ENCODE measurements at regions of chr15 and their contacts with region 1.

Region 1: GRCh38 chr15:41811432-41812195 is 16.3 kb upstream of the JMJD7 start:
- DNase-seq: peak; percentile 65 to 76 (median 73)
- H3K4me3 ChIP-seq: no peak overlapping the region
- H3K4me3 Mint-ChIP-seq: no peak overlapping the region
- H3K27ac ChIP-seq: no peak overlapping the region
- H3K27ac Mint-ChIP-seq: no peak overlapping the region
- H3K4me1 ChIP-seq: peaks cover 0 to 3% of the 10 kb centered on the region in 2 donors
- H3K4me1 Mint-ChIP-seq: peaks cover 4% of the 10 kb centered on the region
- H3K27me3 ChIP-seq: no peaks in the 10 kb centered on the region
- H3K27me3 Mint-ChIP-seq: peaks cover 0 to 1% (median 1%) of the 10 kb centered on the region in 3 donors
- CTCF ChIP-seq: peak; percentile 89

Region 2: GRCh38 chr15:41603941-41604911 is 207.4 kb before region 1 on chr15:
- intact Hi-C with region 1: loop called (anchors 5 kb)
- DNase-seq: peak; percentile 41 to 62 (median 60)
- H3K4me3 ChIP-seq: peak overlapping the region; percentile 20 to 70 (median 54)
- H3K4me3 Mint-ChIP-seq: peak overlapping the region; percentile 81 to 94
- H3K27ac ChIP-seq: no peak overlapping the region
- H3K27ac Mint-ChIP-seq: peak overlapping the region in 6 of 7 donors; percentile 26 to 73 (median 46)
- H3K4me1 ChIP-seq: peaks cover 8 to 10% of the 10 kb centered on the region in 2 donors
- H3K4me1 Mint-ChIP-seq: peaks cover 12% of the 10 kb centered on the region
- H3K27me3 ChIP-seq: no peaks in the 10 kb centered on the region
- H3K27me3 Mint-ChIP-seq: peaks cover 0 to 14% (median 6%) of the 10 kb centered on the region in 3 donors
- CTCF ChIP-seq: peak; percentile 93

Region 3: DNA sequence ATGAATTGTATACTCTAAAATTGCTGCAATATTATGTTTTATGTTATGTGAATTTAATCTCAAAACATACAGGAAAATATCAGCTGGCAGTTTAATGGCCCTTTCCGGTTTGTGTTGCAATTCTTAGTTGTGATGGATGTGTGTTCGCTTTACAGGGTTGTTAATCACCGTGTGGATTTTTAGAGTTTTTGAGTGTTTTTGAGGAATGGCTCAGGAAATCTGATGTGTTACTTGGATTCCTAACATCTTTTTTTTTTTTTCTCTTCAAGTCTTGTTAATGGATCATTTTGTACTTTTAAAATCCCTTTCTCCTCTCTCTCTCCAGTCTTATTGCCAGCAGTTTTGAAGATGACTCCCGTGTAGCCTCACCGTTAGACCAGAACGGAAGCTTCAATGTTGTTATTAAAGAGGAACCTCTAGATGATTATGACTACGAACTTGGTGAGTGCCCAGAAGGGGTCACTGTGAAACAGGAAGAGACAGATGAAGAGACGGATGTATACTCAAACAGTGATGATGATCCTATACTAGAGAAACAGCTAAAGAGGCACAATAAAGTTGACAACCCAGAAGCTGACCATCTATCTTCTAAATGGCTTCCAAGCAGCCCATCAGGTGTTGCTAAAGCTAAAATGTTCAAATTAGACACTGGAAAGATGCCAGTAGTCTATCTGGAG is 115.7 kb before region 1 on chr15:
- intact Hi-C with region 1: loop called in 1 of 2 experiments (anchors 10 kb)
- DNase-seq: peak; percentile 76 to 83 (median 81)
- H3K4me3 ChIP-seq: peak overlapping the region in 2 of 3 experiments; percentile 24 to 45
- H3K4me3 Mint-ChIP-seq: peak overlapping the region; percentile 67 to 79
- H3K27ac ChIP-seq: peak overlapping the region in 1 of 2 donors; percentile 74
- H3K27ac Mint-ChIP-seq: peak overlapping the region; percentile 84 to 94 (median 88)
- H3K4me1 ChIP-seq: peaks cover 28 to 36% of the 10 kb centered on the region in 2 donors
- H3K4me1 Mint-ChIP-seq: peaks cover 40% of the 10 kb centered on the region
- H3K27me3 ChIP-seq: no peaks in the 10 kb centered on the region
- H3K27me3 Mint-ChIP-seq: no peaks in the 10 kb centered on the region
- CTCF ChIP-seq: peak; percentile 64

Region 4: DNA sequence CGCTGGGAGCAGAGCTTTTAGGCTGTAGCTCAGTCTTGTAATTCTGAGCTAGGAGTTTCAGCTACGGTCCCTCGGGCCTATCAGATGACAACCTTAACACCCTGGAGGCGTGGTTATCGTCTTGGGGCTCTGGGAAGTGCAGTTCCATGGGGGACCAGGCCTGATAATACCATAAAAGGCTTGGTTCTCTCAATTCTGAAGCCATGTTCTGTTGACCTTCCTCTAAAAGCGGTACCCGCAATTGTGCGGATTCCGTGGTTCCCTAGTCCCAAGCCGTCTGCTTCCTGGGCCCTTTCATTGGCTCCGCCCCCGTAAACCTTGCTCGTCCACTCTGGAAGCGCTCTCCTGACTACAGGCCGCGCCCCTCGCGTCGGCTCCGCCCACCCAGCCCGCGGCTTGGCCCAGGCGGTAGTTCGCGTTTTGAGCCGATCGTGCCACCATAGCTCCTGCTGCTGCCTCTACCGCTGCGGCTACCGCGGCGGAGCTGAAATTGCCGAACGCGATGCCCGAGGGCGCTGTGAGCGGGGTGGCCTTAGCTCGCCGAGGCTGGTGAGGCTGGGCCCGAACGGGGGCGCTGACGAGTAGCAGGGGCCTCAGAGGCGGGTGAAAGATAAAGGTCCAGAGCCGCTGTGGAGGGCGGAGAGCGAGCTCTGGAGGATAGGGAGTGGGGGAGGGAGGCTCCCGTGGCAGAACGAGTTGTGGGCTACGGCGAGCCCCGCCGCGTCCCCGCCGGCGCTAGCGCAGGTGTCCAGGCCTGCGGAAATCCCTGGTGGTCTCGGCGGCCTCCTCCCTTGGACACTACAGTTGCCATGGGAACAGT is 37.3 kb before region 1 on chr15 and contains the start of gene MAPKBP1:
- intact Hi-C with region 1: loop called (anchors 1 to 2 kb)
- DNase-seq: peak; percentile 98 to 100 (median 98)
- H3K4me3 ChIP-seq: peak within 1 kb of the TSS; percentile 72 to 89 (median 83)
- H3K4me3 Mint-ChIP-seq: peak within 1 kb of the TSS; percentile 83 to 91
- H3K27ac ChIP-seq: peak within 1 kb of the TSS; percentile 76 to 81
- H3K27ac Mint-ChIP-seq: peak within 1 kb of the TSS; percentile 81 to 96 (median 91)
- H3K4me1 ChIP-seq: peaks cover 28 to 32% of the 10 kb centered on the region in 2 donors
- H3K4me1 Mint-ChIP-seq: peaks cover 36% of the 10 kb centered on the region
- H3K27me3 ChIP-seq: no peaks in the 10 kb centered on the region
- H3K27me3 Mint-ChIP-seq: no peaks in the 10 kb centered on the region
- CTCF ChIP-seq: peak; percentile 57
- polyA plus RNA-seq, gene MAPKBP1: 0.76 to 8.6 (median 1.1) TPM

Measured in CD14-positive monocyte (primary cell).